ENCODE measurements at regions of chr3 and their contacts with region 1.

Region 1: DNA sequence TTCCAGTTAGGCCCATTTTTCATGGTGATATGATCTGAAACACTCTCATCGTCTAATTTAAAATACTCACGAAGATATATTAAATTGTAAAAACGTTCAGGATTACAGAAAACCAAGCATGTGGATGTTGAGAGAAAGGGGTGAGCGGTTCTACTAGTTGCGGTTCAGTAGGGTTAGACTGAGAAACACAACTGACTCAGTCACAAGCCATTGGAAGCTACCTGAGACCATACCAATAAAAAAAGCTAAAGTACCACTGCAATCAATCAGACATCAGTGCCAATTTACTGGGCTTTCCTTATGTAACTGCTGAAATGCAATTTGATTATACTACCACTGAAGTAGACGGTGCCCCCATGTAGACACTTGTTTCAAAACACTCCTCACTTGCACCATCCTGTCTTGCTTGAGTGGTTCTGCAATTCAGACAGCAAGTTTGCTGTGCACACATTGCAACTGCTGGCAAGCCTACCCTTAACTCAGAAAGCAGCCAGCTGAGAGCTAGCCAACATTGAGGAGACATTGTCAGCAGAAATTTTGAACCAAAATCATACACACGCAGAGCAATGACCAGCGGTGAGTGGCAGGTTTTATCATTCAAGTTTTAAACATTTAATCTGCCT is 368.7 kb upstream of the ARHGEF26 start:
- DNase-seq: peak; percentile 66
- ATAC-seq: peak; percentile 56
- H3K4me3 ChIP-seq: peak overlapping the region; percentile 55
- H3K27ac ChIP-seq: peak overlapping the region; percentile 92
- H3K4me1 ChIP-seq: peaks cover 37% of the 10 kb centered on the region
- H3K27me3 ChIP-seq: no peaks in the 10 kb centered on the region
- CTCF ChIP-seq: no peak

Region 2: GRCh38 chr3:153138276-153139210 is 614.0 kb before region 1 on chr3:
- CTCF ChIA-PET with region 1: interaction called, 3 read pairs
- POLR2A ChIA-PET with region 1: no interaction called
- intact Hi-C with region 1: loop called (anchors 10 kb)
- DNase-seq: peak; percentile 98
- ATAC-seq: peak; percentile 70
- H3K4me3 ChIP-seq: no peak overlapping the region; the same call in 1 of the 2 replicates
- H3K27ac ChIP-seq: peak overlapping the region; percentile 98
- H3K4me1 ChIP-seq: peaks cover 57% of the 10 kb centered on the region
- H3K27me3 ChIP-seq: no peaks in the 10 kb centered on the region
- CTCF ChIP-seq: no peak

Region 3: GRCh38 chr3:153704115-153704514 is 48.4 kb before region 1 on chr3:
- CTCF ChIA-PET with region 1: no interaction called
- POLR2A ChIA-PET with region 1: no interaction called
- intact Hi-C with region 1: loop called (anchors 5 kb)
- DNase-seq: peak; percentile 61
- ATAC-seq: peak; percentile 80
- H3K4me3 ChIP-seq: no peak overlapping the region
- H3K27ac ChIP-seq: no peak overlapping the region
- H3K4me1 ChIP-seq: peaks cover 12% of the 10 kb centered on the region
- H3K27me3 ChIP-seq: no peaks in the 10 kb centered on the region
- CTCF ChIP-seq: peak; percentile 51

Region 4: DNA sequence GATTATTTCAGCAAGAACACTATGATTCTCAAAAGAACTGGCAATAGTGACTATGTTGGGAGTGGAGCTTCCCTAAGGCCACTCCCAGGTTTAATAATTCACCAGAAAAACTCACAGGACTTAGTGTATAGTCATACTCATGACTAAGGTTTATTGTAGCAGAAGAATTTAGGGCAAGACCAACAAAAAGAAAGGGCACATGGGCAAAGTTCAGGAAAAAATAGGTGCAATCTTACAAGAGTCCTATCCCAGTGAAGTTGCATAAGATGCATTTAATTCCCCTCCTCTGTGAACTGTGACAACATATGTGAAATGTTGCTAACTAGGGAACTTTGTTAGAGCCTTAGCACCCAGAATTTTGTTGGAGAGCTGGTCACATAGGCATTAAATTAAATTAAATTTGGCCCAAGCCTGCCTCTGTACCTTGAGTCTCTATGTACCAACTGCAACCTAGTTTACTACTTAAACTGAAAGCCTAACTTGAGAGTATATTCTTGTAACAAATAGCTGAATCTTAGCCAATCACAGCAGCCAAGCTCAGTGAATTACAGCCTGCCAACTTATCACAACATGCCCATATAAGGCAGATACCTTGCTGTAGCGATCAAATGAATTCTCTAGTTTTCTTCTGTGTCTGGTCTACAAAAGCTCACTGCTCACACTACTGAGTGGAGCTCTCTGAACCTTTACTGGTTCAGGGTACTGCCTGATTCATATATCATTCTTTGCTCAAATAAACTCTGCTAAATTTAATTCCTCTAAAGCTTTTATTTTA is 17.6 kb before region 1 on chr3:
- CTCF ChIA-PET with region 1: no interaction called
- POLR2A ChIA-PET with region 1: interaction called, 3 read pairs
- intact Hi-C with region 1: loop called (anchors 2 kb)
- DNase-seq: peak; percentile 94
- ATAC-seq: peak; percentile 98
- H3K4me3 ChIP-seq: no peak overlapping the region
- H3K27ac ChIP-seq: peak overlapping the region; percentile 83
- H3K4me1 ChIP-seq: peaks cover 16% of the 10 kb centered on the region
- H3K27me3 ChIP-seq: no peaks in the 10 kb centered on the region
- CTCF ChIP-seq: no peak

Measured in PC-3 (cell line).